ENCODE measurements at regions of chr11 and their contacts with region 1.

Region 1: GRCh38 chr11:75532200-75533048 is 6.7 kb upstream of the GDPD5 start:
- DNase-seq: peak; percentile 83 to 91
- H3K4me3 ChIP-seq: no peak overlapping the region
- H3K4me3 Mint-ChIP-seq: no peak overlapping the region
- H3K27ac Mint-ChIP-seq: no peak overlapping the region
- H3K4me1 ChIP-seq: peaks cover 10% of the 10 kb centered on the region
- H3K4me1 Mint-ChIP-seq: peaks cover 11% of the 10 kb centered on the region
- H3K27me3 ChIP-seq: no peaks in the 10 kb centered on the region
- H3K27me3 Mint-ChIP-seq: no peaks in the 10 kb centered on the region
- CTCF ChIP-seq: peak; percentile 95 to 99

Region 2: GRCh38 chr11:75280227-75280701 is 252.2 kb before region 1 on chr11:
- CTCF ChIA-PET with region 1: interaction called, 7 read pairs
- POLR2A ChIA-PET with region 1: no interaction called
- intact Hi-C with region 1: loop called (anchors 2 kb)
- DNase-seq: peak; percentile 86 to 92
- H3K4me3 ChIP-seq: no peak overlapping the region
- H3K4me3 Mint-ChIP-seq: no peak overlapping the region
- H3K27ac Mint-ChIP-seq: peak overlapping the region; percentile 88
- H3K4me1 ChIP-seq: peaks cover 34% of the 10 kb centered on the region
- H3K4me1 Mint-ChIP-seq: peaks cover 32% of the 10 kb centered on the region
- H3K27me3 ChIP-seq: no peaks in the 10 kb centered on the region
- H3K27me3 Mint-ChIP-seq: no peaks in the 10 kb centered on the region
- CTCF ChIP-seq: peak; percentile 99

Region 3: DNA sequence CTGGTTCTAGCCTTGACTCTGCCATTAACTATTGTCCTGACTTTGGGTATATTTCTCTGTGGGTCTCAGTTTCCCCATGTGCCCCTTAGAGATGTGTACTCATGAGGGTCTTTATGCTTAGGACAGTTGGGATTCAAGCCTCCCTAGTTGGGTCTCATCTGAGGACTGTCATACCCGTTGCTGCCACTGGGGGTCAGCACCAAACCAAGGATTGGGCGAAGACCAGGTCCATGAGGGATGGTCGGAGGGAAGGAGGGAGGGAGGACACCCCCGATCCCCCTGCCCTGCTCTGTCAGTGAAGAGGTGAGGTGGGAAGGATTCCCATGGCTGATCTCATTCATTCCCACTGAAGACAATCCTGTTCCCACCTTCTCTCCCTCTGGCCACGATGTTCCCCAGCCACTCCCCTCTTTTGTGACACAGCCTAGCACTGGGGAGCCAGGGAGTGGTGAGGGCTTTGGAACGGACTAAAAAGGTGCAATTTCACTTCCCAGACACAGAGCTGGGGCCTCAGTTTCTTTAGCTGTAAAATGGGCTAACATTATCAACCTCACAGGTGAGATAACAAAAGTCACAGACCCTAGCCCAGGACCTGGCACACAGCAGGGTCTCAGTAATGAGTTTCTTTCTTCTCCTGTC is 87.0 kb before region 1 on chr11:
- CTCF ChIA-PET with region 1: interaction called, 40 read pairs
- POLR2A ChIA-PET with region 1: no interaction called
- intact Hi-C with region 1: loop called (anchors 1 kb)
- DNase-seq: peak; percentile 84 to 92
- H3K4me3 ChIP-seq: no peak overlapping the region
- H3K4me3 Mint-ChIP-seq: no peak overlapping the region
- H3K27ac Mint-ChIP-seq: no peak overlapping the region
- H3K4me1 ChIP-seq: no peaks in the 10 kb centered on the region
- H3K4me1 Mint-ChIP-seq: no peaks in the 10 kb centered on the region
- H3K27me3 ChIP-seq: no peaks in the 10 kb centered on the region
- H3K27me3 Mint-ChIP-seq: no peaks in the 10 kb centered on the region
- CTCF ChIP-seq: peak; percentile 99 to 100

Region 4: GRCh38 chr11:75462117-75462812 is 70.2 kb before region 1 on chr11:
- CTCF ChIA-PET with region 1: interaction called, 3 read pairs
- POLR2A ChIA-PET with region 1: no interaction called
- intact Hi-C with region 1: loop called (anchors 5 kb)
- DNase-seq: no peak
- H3K4me3 ChIP-seq: no peak overlapping the region
- H3K4me3 Mint-ChIP-seq: no peak overlapping the region
- H3K27ac Mint-ChIP-seq: peak overlapping the region; percentile 41
- H3K4me1 ChIP-seq: peaks cover 26% of the 10 kb centered on the region
- H3K4me1 Mint-ChIP-seq: peaks cover 30% of the 10 kb centered on the region
- H3K27me3 ChIP-seq: no peaks in the 10 kb centered on the region
- H3K27me3 Mint-ChIP-seq: no peaks in the 10 kb centered on the region
- CTCF ChIP-seq: no peak

Region 5: GRCh38 chr11:75499449-75500190 is 32.8 kb before region 1 on chr11:
- CTCF ChIA-PET with region 1: interaction called, 5 read pairs
- POLR2A ChIA-PET with region 1: no interaction called
- intact Hi-C with region 1: loop called (anchors 1 kb)
- DNase-seq: peak; percentile 59 to 73
- H3K4me3 ChIP-seq: no peak overlapping the region
- H3K4me3 Mint-ChIP-seq: no peak overlapping the region
- H3K27ac Mint-ChIP-seq: peak overlapping the region; percentile 30
- H3K4me1 ChIP-seq: peaks cover 40% of the 10 kb centered on the region
- H3K4me1 Mint-ChIP-seq: peaks cover 27% of the 10 kb centered on the region
- H3K27me3 ChIP-seq: no peaks in the 10 kb centered on the region
- H3K27me3 Mint-ChIP-seq: no peaks in the 10 kb centered on the region
- CTCF ChIP-seq: no peak

Region 6: GRCh38 chr11:75520688-75521087 is 11.7 kb before region 1 on chr11:
- CTCF ChIA-PET with region 1: interaction called, 12 read pairs
- POLR2A ChIA-PET with region 1: interaction called, 7 read pairs
- intact Hi-C with region 1: no loop called
- DNase-seq: no peak
- H3K4me3 ChIP-seq: no peak overlapping the region
- H3K4me3 Mint-ChIP-seq: no peak overlapping the region
- H3K27ac Mint-ChIP-seq: no peak overlapping the region
- H3K4me1 ChIP-seq: peaks cover 38% of the 10 kb centered on the region
- H3K4me1 Mint-ChIP-seq: peaks cover 14% of the 10 kb centered on the region
- H3K27me3 ChIP-seq: no peaks in the 10 kb centered on the region
- H3K27me3 Mint-ChIP-seq: no peaks in the 10 kb centered on the region
- CTCF ChIP-seq: no peak

Region 7: GRCh38 chr11:75577207-75577606 is 44.8 kb after region 1 on chr11:
- CTCF ChIA-PET with region 1: no interaction called
- POLR2A ChIA-PET with region 1: no interaction called
- intact Hi-C with region 1: no loop called
- DNase-seq: peak in 1 of 2 experiments; percentile 77
- H3K4me3 ChIP-seq: no peak overlapping the region
- H3K4me3 Mint-ChIP-seq: no peak overlapping the region
- H3K27ac Mint-ChIP-seq: peak overlapping the region; percentile 57
- H3K4me1 ChIP-seq: peaks cover 10% of the 10 kb centered on the region
- H3K4me1 Mint-ChIP-seq: peaks cover 17% of the 10 kb centered on the region
- H3K27me3 ChIP-seq: no peaks in the 10 kb centered on the region
- H3K27me3 Mint-ChIP-seq: no peaks in the 10 kb centered on the region
- CTCF ChIP-seq: peak; percentile 48 to 79

Region 8: GRCh38 chr11:75733431-75734107 is 201.1 kb after region 1 on chr11:
- CTCF ChIA-PET with region 1: no interaction called
- POLR2A ChIA-PET with region 1: no interaction called
- intact Hi-C with region 1: no loop called
- DNase-seq: peak in 1 of 2 experiments; percentile 38
- H3K4me3 ChIP-seq: no peak overlapping the region
- H3K4me3 Mint-ChIP-seq: no peak overlapping the region
- H3K27ac Mint-ChIP-seq: peak overlapping the region; percentile 71
- H3K4me1 ChIP-seq: peaks cover 28% of the 10 kb centered on the region
- H3K4me1 Mint-ChIP-seq: peaks cover 20% of the 10 kb centered on the region
- H3K27me3 ChIP-seq: no peaks in the 10 kb centered on the region
- H3K27me3 Mint-ChIP-seq: no peaks in the 10 kb centered on the region
- CTCF ChIP-seq: no peak